Activated CD4-positive, alpha-beta T cell treated with anti-CD3 and anti-CD28 coated beads for 36 hours (primary cell): ENCODE measurements at regions of chr1 and their contacts with region 1.

Region 1: DNA sequence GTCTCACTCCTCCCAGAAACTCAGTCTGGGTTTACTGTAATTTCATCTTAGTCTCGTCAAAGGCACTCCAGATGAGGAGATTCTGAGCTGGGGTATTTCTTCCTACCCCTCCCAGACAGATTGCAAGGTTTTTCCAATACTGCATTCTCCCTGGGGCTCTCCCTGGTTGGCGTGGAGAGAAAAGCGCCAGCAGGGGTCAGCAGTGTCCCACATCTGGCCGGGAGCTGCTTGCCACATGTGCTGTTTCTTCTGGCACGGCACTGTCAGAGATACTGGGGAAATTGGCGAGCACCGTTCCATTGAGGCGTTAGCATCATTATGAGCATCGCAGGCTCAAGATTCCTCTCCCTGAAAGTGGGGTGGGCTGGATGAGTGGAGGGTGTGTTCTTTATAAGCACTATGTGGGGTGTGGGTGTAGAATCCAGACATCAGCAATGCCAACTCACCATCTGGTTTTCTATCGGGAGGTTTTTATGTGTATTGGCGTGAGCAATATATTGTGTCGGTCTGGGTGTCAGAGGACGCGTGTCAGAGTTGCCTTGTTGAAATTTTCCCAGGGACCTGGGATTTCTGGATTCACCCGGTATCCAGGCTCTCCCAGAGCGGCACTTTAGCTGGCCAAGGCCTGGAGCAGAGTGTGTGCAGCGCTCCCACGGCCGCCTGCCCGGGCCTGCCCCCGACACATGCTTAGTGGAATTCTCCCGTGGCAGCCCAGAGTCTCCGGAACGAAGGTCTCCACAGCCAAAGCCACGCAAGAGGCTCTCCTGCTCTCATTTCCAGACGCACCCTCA is 8.0 kb upstream of the NAV1 start:
- DNase-seq: peak; percentile 76
- ATAC-seq: peak; percentile 76
- H3K4me3 Mint-ChIP-seq: no peak overlapping the region
- H3K27ac Mint-ChIP-seq: no peak overlapping the region
- H3K4me1 Mint-ChIP-seq: peaks cover 7% of the 10 kb centered on the region
- H3K27me3 Mint-ChIP-seq: peaks cover 3% of the 10 kb centered on the region

Region 2: GRCh38 chr1:201348211-201348566 is 182.7 kb before region 1 on chr1:
- CTCF ChIA-PET with region 1: no interaction called
- POLR2A ChIA-PET with region 1: no interaction called
- intact Hi-C with region 1: no loop called
- DNase-seq: peak; percentile 61
- ATAC-seq: peak; percentile 76
- H3K4me3 Mint-ChIP-seq: no peak overlapping the region
- H3K27ac Mint-ChIP-seq: no peak overlapping the region
- H3K4me1 Mint-ChIP-seq: no peaks in the 10 kb centered on the region
- H3K27me3 Mint-ChIP-seq: peaks cover 23% of the 10 kb centered on the region

Region 3: GRCh38 chr1:201566933-201567801 is 36.2 kb after region 1 on chr1:
- CTCF ChIA-PET with region 1: no interaction called
- POLR2A ChIA-PET with region 1: no interaction called
- intact Hi-C with region 1: no loop called
- DNase-seq: no peak
- ATAC-seq: no peak
- H3K4me3 Mint-ChIP-seq: no peak overlapping the region
- H3K27ac Mint-ChIP-seq: no peak overlapping the region
- H3K4me1 Mint-ChIP-seq: no peaks in the 10 kb centered on the region
- H3K27me3 Mint-ChIP-seq: no peaks in the 10 kb centered on the region

Region 4: DNA sequence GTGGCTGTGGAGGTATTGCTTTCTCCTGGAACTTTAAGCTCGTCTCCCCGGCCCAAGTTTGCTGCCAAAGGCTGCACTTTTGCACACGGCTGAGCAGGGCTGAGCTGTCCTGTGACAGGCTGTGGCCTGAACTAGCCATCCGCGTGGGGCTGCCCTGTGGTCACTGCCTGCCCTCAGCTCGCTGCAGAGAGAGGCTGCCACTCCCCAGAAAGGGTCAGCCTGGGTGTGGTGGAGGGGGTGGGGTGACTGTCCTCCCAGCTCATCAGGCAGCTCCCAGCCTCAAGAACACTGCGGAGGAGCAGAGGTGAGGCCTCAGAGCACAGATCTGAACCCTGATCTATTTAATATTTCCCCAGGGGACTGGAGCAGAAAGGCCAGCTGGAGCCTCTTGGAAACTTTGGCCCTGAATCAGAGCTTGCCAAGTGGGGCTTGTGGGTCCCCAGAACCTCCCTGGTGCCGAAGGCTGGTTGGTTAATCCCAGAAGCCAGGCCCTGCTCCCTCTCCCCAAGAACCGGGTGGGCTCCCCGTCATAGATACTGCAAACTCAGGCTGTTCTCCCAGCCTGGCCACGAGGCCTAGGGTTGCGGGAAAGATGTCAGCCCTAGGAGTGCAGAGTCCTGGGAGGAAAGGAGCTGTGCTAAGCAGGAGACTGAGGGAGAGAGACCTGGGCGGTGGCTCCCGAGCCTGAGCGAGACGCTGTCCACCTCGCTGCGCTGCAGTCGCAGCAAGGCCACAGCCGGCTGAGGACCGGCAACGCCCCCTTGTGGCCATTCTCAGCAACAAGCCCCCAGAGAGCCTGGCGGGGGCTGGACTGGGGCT is 172.9 kb after region 1 on chr1:
- CTCF ChIA-PET with region 1: interaction called, 5 read pairs
- POLR2A ChIA-PET with region 1: no interaction called
- intact Hi-C with region 1: loop called in 1 of 2 experiments (anchors 1 kb)
- DNase-seq: peak; percentile 86
- ATAC-seq: peak; percentile 87
- H3K4me3 Mint-ChIP-seq: no peak overlapping the region
- H3K27ac Mint-ChIP-seq: no peak overlapping the region
- H3K4me1 Mint-ChIP-seq: no peaks in the 10 kb centered on the region
- H3K27me3 Mint-ChIP-seq: no peaks in the 10 kb centered on the region

Region 5: DNA sequence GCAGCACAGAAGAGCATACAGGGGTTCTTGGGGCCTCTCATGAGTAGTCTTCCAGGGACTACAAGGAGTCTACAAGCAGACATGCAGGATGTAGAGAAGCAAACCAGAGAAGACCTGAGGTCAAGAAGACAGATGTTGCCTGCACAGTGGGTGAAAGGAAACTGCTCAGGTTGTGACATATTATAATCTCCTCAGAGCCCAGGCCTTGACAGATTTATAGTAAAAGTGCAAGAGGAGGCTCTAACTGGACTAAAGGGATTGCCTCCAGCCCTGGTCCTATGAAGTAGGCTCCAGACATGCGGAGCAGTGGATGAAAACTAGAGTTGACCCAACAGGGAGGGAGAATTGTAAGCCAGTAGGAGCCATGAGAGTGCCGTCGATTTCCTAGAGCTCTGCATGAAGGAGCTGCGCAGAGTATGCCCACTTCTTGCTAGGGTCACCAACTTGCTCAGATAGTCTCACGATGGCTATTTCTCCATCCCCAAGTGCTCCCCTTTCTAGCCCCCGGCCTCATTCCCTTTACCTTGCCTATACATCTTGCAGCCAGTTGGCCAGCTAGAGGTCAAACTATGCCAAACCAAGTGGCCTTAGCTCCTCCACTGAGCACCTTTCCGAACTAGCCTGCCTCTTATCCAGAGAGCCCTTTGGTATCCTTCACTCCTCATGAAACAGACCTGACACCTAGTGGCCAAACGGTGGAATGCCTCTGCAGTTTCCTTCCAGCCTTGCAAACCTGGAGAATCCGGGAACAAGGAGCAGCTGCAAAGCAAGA is 261.8 kb after region 1 on chr1:
- CTCF ChIA-PET with region 1: interaction called, 3 read pairs
- POLR2A ChIA-PET with region 1: no interaction called
- intact Hi-C with region 1: loop called in 1 of 2 experiments (anchors 1 kb)
- DNase-seq: peak; percentile 72
- ATAC-seq: peak; percentile 80
- H3K4me3 Mint-ChIP-seq: no peak overlapping the region
- H3K27ac Mint-ChIP-seq: no peak overlapping the region
- H3K4me1 Mint-ChIP-seq: peaks cover 6% of the 10 kb centered on the region
- H3K27me3 Mint-ChIP-seq: no peaks in the 10 kb centered on the region